Left cardiac atrium (tissue), 4 donors: ENCODE measurements at regions of chr9 and their contacts with region 1.

Region 1: DNA sequence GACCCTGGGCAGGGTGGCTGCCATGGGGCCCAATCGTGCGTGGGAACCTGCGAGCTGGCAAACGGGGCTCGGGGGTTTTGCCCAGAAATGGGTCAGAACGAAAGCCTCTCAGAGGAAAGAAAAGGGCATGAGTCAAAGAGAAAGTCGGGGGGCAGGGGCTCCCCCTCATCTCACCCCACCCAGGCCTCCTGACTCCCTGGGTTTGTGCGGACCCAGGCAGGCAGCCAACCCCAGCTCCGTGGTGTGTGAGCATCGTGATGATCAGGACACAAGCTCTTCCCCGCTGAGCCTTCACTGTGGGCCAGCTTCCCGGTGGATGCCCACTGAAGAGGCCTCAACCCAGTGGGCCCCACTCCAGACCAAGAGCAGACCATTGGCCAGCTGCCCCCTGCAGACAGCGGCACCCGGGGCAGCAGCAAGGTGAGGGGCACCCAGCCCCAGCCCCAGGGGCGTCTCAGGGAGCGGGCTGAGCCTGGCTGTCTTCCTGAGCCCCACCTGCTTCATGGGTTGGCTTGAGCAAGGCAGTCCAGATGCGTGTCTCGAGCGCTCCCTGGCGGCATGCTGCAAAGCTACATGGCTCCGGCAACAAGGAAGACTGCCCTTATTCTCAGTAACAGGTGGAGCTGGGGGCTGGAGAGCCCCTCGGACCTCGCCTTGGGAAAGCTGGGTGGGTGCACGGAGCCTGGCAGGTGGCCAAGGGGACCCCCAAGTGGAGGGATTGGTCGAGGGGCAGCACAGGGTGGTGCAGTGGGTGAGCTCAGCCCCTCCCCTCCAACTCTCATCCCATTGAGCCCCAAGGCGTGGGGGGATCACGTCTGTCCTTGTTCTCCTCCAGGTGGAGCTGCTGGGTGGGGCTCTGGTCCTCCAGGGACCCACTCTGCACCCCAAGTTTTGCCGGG is 3.2 kb upstream of the FUT7 start:
- DNase-seq: peak; percentile 78
- ATAC-seq: peak; percentile 72 to 82

Region 2: DNA sequence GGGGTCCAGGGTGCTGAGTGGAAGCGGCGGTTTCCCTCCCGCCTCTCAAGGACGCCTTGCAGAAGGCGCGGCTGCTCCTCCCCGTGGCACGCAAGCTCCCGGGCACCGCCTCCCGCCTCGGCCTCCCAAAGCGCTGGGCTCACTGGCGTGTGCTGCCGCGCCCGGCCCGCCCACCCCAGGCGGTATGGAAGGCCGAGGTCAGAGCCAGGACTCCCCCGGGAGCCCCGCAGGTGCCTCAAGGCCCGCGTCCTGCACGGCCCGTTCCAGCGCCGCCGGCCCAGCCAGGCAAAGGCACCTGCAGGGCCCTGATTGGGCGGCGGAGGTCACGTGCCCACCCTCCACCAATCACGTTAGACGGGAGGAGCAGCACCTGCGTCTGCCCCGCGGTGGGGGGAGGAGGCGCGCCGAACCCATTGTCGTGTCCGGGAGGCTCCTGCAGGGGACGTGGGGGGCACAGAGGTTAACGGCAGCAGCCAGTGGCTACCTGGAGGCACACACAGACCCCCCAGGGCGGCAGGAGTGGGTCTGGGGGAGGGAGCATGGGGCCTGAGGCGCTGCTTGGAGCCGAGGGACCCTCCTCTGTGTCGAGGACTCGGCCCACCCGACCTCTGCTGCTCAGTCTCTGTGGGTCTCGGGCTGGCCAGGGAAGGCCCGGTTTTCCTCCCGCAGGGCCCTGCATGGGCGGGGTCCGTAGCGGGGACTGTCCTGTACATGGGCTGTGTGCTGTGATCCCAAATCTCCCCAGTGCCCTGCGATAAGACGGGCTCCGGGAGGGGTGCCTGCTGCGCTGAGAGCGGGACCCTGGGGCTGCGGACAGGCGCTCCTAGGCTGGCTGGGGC is 85.1 kb before region 1 on chr9:
- intact Hi-C with region 1: loop called (anchors 2 to 5 kb)
- DNase-seq: peak; percentile 96
- ATAC-seq: peak; percentile 89

Region 3: DNA sequence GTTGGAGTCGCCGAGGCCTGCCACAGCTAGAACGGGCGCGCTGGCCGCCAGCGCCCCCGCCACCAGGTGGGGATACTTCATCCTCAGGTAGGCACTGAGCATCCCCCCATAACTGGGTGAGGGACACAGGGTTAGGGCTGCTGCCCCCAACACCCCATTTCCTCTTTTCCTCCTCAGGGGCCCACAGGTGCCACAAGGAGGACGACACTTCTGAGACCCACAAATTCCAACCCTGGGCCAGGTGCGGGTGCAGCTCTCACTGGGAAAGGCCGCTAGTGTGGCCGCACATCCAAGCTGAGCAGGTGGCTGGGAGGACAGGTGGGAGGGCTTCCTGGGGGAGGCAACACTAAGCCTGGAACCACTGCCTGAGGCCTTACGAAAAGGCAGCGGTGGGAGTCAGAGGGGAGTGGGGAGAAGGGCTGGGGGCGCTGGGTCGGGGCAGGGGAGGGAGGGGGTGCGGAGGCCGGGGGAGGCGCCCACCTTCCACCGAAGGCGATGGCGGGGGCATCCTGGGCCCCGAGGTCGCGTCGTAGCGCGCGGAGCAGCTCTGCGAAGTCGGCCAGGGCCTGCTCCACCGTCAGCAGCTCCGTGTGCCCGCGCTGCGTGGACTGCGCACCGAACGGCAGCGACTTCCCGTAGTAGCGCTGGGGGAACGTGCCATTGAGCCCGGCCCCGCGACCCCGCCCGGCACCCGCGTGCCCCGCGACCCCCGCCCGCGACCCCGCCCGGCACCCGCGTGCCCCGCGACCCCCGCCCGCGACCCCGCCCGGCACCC is 78.5 kb after region 1 on chr9:
- intact Hi-C with region 1: no loop called
- DNase-seq: no peak
- ATAC-seq: no peak

Region 4: GRCh38 chr9:137396227-137396626 is 361.1 kb after region 1 on chr9:
- intact Hi-C with region 1: no loop called
- DNase-seq: no peak
- ATAC-seq: no peak